Activated CD4-positive, alpha-beta memory T cell treated with anti-CD3 and anti-CD28 coated beads for 36 hours (primary cell): ENCODE measurements at regions of chr10 and their contacts with region 1.

Region 1: DNA sequence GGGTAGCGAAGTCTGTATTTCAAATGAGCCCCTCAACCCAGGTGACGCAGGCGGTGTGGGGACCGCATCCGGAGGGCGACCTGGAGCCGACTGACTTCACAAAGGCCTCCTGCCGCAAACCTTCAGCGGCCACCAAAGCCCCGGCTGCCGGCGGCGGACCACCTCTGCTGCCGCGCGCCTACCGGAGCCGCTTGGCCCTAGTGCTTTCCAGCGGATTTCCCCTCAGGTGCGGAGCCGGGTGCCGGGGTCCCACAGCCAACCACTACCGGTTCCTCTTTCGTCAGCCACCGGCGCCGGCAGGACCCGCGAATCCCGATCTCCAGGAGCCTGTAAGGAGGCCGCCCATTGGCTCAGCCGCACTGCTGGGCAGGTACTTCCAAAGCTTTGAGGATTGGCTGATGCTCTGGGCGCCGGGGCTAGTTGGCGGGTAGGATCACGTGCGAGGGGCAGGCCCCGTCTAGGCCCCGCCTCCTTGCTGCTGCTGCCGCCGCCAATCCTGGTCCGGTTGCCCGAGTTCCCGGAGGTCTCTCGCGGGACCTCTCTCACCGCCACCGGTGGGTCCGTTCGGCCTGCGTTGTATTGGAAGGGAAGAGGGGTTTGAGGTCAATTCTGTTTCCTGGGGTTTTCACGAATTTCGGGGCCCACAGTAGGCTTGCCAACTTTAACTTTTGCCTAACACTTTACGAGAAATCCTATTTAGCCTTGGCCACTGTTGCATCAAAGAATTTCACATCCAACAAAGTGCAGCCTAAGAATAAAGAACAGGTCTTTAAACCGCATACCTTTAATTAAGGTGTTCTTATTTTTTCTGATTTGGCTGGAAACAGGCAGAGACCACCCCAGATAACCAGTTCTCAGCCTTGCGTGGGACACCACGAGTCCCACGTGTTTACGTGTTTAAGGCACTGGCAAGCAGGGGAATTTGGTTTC is at the start of gene GSTO2:
- DNase-seq: peak; percentile 99
- H3K4me3 Mint-ChIP-seq: peak within 1 kb of the TSS; percentile 78
- H3K27ac Mint-ChIP-seq: peak within 1 kb of the TSS; percentile 95
- H3K4me1 Mint-ChIP-seq: peaks cover 39% of the 10 kb centered on the region
- H3K27me3 Mint-ChIP-seq: peaks cover under 1% of the 10 kb centered on the region
- total RNA-seq, gene GSTO2: 2.3 to 2.6 TPM

Region 2: DNA sequence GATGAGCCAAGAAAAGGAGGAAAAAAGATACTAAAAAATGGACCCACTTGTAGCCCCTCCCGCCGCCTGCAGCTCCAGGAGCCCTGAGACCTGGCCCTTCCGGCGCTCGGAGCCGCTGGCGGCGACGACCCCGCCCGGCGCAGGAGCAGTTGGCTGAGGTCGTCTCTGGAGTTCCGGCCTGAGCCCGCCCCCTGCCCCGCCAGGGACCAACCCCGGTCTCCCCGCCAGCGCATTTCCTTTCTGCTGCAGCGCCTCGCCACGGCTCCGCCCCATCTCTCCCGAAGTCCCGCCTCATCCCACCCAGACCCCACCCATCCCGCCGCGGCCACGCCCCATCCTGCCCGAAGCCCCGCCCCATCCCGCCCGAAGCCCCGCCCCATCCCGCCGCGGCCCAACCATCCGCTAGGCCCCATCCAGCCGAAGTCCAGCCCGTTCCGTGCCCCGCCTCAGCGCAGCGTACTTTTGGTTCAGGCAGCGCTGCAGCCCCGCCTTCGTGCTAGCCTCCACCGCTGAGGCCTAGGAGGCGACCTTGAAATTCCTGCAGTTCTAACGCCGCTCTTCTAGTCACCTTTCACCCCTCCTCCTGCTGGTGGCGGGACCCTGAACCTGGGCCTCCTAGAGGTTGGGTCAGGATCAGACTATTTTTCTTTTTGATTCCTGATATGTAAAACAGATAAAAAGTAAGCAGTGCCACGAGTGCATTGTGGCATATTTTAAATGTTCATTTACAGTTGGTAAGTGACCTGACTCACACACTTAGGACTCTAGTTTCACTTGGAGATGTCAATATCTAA is 350.7 kb before region 1 on chr10 and contains the start of gene STN1:
- CTCF ChIA-PET with region 1: no interaction called
- POLR2A ChIA-PET with region 1: no interaction called
- intact Hi-C with region 1: loop called (anchors 1 kb)
- DNase-seq: peak; percentile 98
- H3K4me3 Mint-ChIP-seq: peak within 1 kb of the TSS; percentile 98
- H3K27ac Mint-ChIP-seq: peak within 1 kb of the TSS; percentile 98
- H3K4me1 Mint-ChIP-seq: peaks cover 29% of the 10 kb centered on the region
- H3K27me3 Mint-ChIP-seq: no peaks in the 10 kb centered on the region
- total RNA-seq, gene STN1: 56.1 to 57.0 TPM

Region 3: DNA sequence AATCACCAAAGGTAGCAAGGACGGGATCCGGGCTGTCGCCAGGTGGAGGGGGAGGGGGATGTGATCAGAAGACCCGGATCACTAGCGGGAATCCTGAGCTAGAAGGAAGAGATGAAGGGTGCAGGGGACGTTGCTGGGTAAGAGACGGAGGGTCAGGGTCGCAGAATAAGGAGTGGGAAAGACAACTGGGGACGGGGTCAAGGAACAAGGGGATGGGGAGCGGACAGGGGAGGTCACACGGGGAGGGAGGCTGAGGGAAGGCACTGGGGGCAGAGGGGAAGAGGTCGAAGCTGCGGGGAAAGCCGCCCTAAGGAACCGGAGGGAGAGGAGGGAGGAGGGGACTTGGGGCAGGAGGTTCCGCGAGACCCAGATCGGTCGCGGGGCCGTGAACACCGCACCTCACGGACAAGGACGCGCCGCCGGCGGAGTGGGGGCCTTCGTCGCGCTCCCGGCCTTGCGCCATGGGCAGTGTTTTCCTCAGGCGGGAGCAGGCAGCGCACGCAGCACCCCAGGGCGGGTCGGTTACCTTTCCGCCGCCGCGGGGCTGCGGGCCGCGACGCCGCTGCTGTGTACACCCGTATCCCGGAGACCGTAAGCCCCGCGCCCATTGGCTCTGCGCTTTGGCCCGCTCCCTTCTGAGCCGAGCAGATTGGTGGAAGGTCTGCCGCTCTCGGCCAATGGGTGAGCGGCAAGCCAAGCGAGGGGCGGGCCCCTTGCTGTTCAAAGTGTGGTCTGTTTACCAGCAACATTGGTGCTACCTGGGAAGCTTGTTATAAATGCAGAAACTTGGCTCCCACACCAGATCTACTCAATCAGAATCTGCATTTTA is 37.0 kb before region 1 on chr10 and contains the start of gene CFAP43:
- CTCF ChIA-PET with region 1: interaction called, 5 read pairs
- POLR2A ChIA-PET with region 1: interaction called, 3 read pairs
- intact Hi-C with region 1: loop called (anchors 1 kb)
- DNase-seq: peak; percentile 99
- H3K4me3 Mint-ChIP-seq: peak within 1 kb of the TSS; percentile 80
- H3K27ac Mint-ChIP-seq: peak within 1 kb of the TSS; percentile 4
- H3K4me1 Mint-ChIP-seq: peaks cover 11% of the 10 kb centered on the region
- H3K27me3 Mint-ChIP-seq: peaks cover 11% of the 10 kb centered on the region
- total RNA-seq, gene CFAP43: 0.19 to 0.22 TPM

Region 4: GRCh38 chr10:104308439-104308903 is 39.5 kb after region 1 on chr10:
- CTCF ChIA-PET with region 1: interaction called, 43 read pairs
- POLR2A ChIA-PET with region 1: interaction called, 3 read pairs
- intact Hi-C with region 1: loop called (anchors 2 kb)
- DNase-seq: peak; percentile 54
- H3K4me3 Mint-ChIP-seq: no peak overlapping the region
- H3K27ac Mint-ChIP-seq: peak overlapping the region; percentile 44
- H3K4me1 Mint-ChIP-seq: peaks cover 49% of the 10 kb centered on the region
- H3K27me3 Mint-ChIP-seq: peaks cover 5% of the 10 kb centered on the region

Region 5: DNA sequence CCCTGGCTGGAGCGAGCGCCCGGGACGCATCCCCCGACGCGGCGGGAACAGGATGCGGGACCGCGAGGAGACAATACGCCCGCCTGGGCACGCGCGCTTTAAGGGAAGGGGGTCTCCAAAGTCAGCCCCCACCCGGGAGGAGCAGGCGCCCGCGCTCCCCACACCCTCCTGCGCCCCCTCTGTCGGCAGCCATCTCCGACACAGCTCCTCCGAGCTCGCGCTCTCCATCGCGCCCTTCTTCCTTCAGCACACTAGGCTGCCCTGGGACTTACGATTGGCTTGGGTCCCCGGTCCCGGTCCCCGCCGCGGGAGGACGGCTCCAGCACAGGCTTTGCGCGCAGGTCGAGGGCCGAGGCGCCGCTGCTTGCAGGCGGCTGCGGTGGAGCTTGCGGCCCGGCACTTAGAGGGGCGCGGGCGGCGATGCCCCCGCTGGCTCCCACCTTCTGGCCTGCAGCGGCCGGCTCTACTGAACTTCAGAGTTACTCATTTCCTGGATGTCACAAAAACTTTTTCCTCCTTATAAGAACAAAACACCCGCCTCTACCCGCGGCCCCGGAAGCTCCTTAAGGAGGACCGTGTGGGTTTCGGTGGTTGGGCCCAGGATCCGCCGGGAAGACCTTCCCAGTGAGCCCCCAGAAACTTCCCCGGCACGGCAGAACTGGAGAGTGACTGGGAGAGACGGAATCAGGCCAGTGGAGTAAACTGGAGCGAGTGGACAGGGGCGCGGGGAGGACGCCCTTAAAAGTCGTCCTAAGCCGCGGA is 69.2 kb after region 1 on chr10 and contains the start of gene ITPRIP:
- CTCF ChIA-PET with region 1: interaction called, 15 read pairs
- POLR2A ChIA-PET with region 1: interaction called, 6 read pairs
- intact Hi-C with region 1: loop called (anchors 1 kb)
- DNase-seq: peak; percentile 81
- H3K4me3 Mint-ChIP-seq: peak within 1 kb of the TSS; percentile 82
- H3K27ac Mint-ChIP-seq: peak within 1 kb of the TSS; percentile 90
- H3K4me1 Mint-ChIP-seq: peaks cover 48% of the 10 kb centered on the region
- H3K27me3 Mint-ChIP-seq: no peaks in the 10 kb centered on the region
- total RNA-seq, gene ITPRIP: 15.6 to 16.6 TPM